Activated T-helper 2 cell treated with anti-CD3 and anti-CD28 coated beads, Interferon-gamma antibody, Interleukin-2, Interleukin-4, amounts not matched to agents 10 μg/mL and 5 μg/mL and 100 μg/mL, durations not matched to agents 14 hours and 24 hours and 36 hours (primary cell): ENCODE measurements at regions of chr9 and their contacts with region 1.

Region 1: DNA sequence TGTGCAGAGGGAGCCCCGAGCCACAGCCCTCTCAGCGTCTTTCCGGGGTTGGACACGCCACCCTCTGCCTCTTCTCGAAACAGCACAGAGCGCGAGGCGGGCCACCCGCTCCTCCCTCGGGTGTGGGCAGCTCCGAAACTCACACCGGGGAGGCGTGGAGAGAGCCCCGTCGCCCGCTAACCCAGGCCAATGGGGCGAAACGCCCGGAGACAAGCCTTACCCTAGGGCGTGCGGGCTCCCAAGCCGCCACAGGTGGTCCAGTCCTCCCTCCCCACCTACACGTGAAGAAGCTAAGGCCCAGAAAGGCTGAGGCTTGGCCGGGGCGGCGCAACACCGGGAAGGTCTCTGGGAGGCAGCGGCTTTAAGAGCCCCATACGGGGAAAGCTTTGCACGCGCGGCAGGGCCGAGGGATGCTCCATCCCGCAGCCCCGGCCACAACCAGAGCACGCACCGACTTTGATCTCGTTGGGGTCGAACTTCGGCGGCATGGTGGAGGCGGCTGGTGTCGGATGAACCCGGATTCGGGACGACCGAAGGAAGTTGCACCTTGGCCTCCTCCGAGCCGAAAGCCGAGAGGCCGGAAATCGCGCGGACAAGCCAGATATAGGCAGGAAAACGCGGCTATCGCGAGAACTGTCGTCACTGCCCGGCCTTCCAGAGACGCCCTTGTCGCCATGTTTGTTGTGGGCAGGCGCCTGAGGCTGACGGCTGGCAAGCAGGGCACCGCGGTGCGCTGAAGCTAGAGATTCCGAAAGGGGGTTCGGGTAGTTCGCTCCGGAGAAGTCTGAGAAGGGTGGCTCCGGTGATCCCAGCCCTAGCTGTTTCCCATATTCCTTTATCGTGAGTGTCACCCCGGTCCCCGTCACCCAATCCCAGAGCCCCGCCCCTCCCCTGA is at the starts of genes LRSAM1 and RPL12:
- DNase-seq: peak; percentile 95
- H3K4me3 Mint-ChIP-seq: peak within 1 kb of the TSS; percentile 97
- H3K27ac Mint-ChIP-seq: peak within 1 kb of the TSS; percentile 97
- H3K4me1 Mint-ChIP-seq: peaks cover 32% of the 10 kb centered on the region
- H3K27me3 Mint-ChIP-seq: no peaks in the 10 kb centered on the region
- total RNA-seq, gene LRSAM1: 26.4 and 26.6 TPM in 2 replicates
- total RNA-seq, gene RPL12: 1,311 and 1,325 TPM in 2 replicates

Region 2: GRCh38 chr9:127388037-127388855 is 62.8 kb before region 1 on chr9:
- intact Hi-C with region 1: loop called (anchors 2 kb)
- DNase-seq: peak; percentile 83
- H3K4me3 Mint-ChIP-seq: peak overlapping the region; percentile 24
- H3K27ac Mint-ChIP-seq: peak overlapping the region; percentile 74
- H3K4me1 Mint-ChIP-seq: peaks cover 26% of the 10 kb centered on the region
- H3K27me3 Mint-ChIP-seq: peaks cover 41% of the 10 kb centered on the region

Region 3: GRCh38 chr9:127715394-127716337 is 264.6 kb after region 1 on chr9 and contains the starts of genes PTRH1 and TTC16:
- intact Hi-C with region 1: loop called (anchors 1 kb)
- DNase-seq: peak; percentile 95
- H3K4me3 Mint-ChIP-seq: peak within 1 kb of the TSS; percentile 92
- H3K27ac Mint-ChIP-seq: peak within 1 kb of the TSS; percentile 90
- H3K4me1 Mint-ChIP-seq: peaks cover 23% of the 10 kb centered on the region
- H3K27me3 Mint-ChIP-seq: no peaks in the 10 kb centered on the region
- total RNA-seq, gene PTRH1: 20.1 and 21.5 TPM in 2 replicates
- total RNA-seq, gene TTC16: 0.18 TPM in 1 of 2 replicates, not detected in the other